ENCODE measurements at regions of chr17 and their contacts with region 1.

Region 1: DNA sequence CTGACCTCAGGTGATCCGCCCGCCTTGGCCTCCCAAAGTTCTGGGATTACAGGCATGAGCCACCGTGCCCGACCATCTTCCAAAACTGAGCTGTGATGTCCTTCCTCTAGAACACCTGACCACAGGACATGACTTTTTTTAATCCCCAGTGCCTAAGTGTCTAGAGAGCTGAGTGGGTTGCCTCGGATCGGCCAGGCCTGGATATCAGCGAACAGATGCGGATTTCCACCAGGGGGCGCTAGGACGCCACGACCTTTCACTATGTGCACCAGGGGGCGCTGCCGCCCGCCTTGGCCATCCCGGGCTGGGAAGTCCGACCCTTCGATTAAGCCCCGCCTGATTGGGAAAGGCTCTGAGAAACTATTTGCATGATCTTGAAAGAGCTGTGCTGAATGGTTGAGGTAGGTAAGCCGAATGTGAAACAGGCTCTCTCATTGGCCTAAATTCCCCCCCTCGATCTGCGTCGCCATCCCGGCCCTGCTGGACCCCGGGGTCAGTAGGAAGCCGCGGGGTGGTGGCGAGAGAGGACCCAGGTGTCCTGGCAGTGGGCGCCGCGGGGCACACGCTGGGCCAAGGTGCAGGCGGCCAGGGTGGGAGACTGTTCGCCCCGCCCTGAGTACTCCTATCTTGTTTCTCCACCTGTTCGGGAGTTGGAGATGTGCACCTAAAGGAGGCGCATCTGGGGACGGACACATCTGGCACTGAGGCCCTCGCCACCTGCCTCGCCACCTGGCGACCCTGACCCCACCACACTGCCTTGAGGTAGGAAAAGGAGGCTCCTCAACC is at the start of gene ACBD4:
- DNase-seq: peak; percentile 97
- CTCF ChIP-seq: peak; percentile 100

Region 2: GRCh38 chr17:45197555-45198334 is 62.4 kb after region 1 on chr17:
- in situ Hi-C with region 1: loop called (anchors 10 kb)
- DNase-seq: peak; percentile 92
- CTCF ChIP-seq: peak; percentile 97